ENCODE measurements at regions of chr12 and their contacts with region 1.

Region 1: GRCh38 chr12:101829639-101830366 is 956 bp downstream of the GNPTAB start:
- DNase-seq: no peak
- H3K4me3 ChIP-seq: peak overlapping the region; percentile 47 to 89 (median 70)
- H3K27ac ChIP-seq: peak overlapping the region; percentile 73 to 94 (median 90)
- H3K4me1 ChIP-seq: peaks cover 6 to 65% (median 45%) of the 10 kb centered on the region in 6 donors
- H3K27me3 ChIP-seq: no peaks in the 10 kb centered on the region
- CTCF ChIP-seq: no peak
- POLR2A ChIP-seq: no peak

Region 2: DNA sequence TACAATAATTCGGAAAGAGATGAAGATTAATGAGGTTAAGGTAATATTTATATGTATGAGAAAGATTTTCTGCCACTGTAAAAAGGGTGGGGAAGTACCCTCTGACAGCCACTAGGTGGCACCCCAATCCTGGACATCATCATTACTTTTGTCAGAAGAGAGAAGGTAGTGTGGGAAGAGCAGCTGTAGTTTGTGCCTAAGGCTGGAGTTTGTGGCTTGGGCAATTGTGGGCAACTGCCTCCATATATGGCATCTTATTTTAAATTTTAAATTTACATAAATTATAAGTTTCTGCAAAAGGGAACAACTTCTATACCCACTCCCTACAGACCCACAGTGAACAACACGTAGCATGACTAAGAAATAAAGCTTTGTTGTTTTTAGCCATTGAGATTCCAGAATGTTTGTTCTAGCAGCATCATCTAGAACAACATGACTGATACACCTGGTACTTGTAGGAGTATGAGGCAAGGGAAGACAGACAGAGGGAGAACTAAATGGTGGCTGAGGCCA is 56.1 kb before region 1 on chr12:
- intact Hi-C with region 1: loop called (anchors 5 kb)
- DNase-seq: no peak
- H3K4me3 ChIP-seq: no peak overlapping the region
- H3K27ac ChIP-seq: no peak overlapping the region
- H3K4me1 ChIP-seq: peaks cover 0 to 46% (median 8%) of the 10 kb centered on the region in 6 donors
- H3K27me3 ChIP-seq: no peaks in the 10 kb centered on the region
- CTCF ChIP-seq: peak; percentile 85 to 97 (median 94)
- POLR2A ChIP-seq: no peak